ENCODE measurements at regions of chr6 and their contacts with region 1.

Region 1: DNA sequence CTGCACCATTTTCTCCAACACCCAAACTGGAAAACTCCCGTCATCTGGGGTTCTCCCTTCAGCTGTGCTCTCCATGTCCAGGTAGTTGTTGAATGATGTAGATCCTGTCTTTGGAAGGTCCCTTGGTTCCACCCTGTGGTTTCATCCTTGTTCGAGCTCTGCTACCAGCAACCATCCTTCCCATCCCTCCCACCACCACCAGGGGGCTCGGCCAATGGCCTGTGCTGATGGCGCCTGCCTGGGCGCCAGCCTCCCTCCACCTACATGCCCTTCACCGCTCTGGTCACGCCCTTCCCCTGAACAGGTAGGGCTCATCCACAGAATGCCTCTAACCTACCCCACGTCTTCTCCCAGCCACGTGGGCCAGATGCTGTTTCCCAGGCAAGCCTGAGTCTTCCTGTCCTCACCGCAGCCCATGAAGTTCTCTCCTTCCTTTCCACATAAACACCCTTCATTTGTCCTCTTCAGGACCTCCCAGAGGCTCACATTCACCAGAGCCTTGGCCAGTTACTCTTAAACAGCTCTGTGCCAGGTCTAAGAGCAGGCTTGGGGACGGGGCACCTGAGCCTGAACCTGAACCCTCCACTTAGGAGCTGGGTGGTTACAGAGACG is 75.1 kb upstream of the DUSP22 start:
- DNase-seq: no peak
- CTCF ChIP-seq: peak; percentile 50

Region 2: DNA sequence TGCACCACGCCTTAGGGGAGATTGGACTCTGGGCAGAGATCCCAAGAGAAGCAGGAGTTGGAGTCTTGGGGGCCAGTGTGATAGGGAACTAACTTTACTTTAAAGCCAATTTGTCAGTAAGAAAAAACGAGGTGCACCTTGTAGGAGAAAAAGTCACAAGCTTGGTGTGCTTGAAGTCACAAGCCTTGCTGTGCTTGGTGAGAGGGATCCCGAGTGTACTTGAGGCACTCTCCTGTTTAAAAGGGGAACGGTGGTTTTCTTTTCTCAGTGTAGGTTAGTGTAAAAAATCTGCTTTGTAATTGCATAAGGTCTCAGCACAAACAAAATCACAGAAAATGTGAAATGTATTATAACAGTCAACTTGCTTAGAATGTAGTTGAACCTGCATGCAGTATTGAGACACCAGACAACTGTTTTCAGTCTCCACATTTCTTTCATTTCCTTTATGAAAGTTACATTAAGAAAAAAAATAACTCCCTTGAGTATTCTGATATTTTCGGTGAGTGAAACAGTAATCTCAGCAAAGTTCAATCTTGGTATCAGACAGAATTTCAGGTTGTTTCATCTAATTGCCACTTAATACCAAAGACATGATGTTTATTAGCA is 36.0 kb before region 1 on chr6:
- CTCF ChIA-PET with region 1: interaction called, 620 read pairs
- POLR2A ChIA-PET with region 1: no interaction called
- DNase-seq: peak; percentile 65
- CTCF ChIP-seq: no peak

Region 3: DNA sequence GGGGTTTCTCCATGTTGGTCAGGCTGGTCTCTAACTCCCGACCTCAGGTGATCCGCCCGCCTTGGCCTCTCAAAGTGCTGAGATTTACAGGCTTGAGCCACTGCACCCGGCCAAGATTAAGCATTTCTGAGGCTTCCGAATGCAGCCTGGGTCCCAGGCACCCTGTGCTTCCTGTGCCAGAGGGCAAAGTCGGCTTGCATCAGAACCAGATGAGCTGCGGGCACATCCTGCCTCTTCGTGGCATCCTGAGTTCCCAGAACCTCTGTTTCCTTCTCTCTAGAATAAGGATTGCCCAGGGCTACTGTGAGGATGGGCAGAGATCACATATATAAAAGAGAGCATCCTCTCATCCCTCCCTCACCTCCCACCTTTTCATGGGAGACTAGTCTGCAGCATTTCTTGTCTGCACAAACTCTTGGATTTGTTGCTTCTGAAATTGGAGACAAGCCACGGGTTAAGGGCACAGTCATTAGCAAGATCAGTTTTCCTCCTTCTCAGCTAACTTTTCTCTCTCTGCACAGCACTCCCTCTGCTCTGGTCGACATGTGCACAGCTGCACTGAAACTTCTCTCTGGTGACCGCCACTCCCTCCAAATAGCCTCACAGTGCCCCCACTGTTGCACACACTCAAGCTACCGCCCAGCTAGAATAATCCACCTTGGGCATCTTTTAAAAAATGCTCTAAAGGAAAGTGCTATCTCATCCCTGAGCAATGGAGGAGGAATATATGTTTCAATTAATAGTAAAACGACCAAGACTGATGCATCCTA is 24.1 kb after region 1 on chr6:
- CTCF ChIA-PET with region 1: no interaction called
- POLR2A ChIA-PET with region 1: no interaction called
- DNase-seq: no peak
- CTCF ChIP-seq: no peak

Region 4: DNA sequence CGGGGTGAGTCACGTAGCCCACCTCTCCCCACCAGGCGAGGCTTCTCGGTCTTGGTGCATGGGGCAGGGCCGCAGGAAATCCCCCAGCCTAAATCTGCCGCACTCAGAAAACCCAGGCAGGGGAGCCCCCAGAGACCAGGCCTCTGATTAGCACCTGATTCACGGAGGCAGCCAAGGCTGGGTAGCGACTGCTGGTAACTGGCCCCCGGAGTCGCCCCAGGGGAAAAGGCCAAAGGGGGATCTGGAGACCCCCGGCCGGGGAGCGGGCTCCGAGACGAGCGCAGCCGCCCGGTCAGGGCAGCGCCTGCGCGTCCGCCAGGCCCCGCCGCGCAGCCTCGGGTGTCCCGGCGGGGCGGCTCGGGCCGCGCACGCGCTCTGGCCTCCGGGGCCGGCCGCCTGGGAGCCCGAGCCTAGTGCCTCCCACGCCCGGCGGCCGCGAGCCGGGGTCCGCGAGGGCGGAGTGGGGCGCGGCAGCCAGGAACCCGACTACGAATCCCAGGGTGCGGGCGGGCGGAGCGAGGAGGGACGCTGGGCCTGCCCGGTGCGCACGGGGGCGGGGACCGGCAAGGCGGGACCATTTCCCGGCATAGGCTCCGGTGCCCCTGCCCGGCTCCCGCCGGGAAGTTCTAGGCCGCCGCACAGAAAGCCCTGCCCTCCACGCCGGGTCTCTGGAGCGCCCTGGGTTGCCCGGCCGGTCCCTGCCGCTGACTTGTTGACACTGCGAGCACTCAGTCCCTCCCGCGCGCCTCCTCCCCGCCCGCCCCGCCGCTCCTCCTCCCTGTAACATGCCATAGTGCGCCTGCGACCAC is 74.7 kb after region 1 on chr6 and contains the start of gene DUSP22:
- CTCF ChIA-PET with region 1: interaction called, 11 read pairs
- POLR2A ChIA-PET with region 1: no interaction called
- DNase-seq: peak; percentile 100
- CTCF ChIP-seq: no peak

Region 5: DNA sequence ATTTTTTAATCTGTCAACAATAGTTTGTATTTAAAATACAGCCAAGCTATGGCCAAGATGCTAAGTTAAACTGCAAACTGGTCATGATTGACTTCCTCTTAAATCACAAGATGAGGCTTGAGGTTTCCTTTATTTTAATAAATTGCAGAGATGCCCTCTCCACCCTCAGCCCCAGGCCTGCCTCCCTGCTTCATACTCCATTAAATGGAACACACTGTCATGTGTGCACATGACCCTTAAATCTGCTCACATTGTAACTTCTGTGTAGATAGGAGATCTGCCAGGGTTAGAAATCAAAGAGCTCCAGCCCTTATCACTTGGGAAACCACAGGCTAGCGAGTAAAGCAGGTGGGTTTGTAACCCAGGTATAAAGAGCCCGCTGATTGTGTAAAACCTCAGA is 95.9 kb after region 1 on chr6:
- CTCF ChIA-PET with region 1: interaction called, 20 read pairs
- POLR2A ChIA-PET with region 1: no interaction called
- DNase-seq: no peak
- CTCF ChIP-seq: no peak

Region 6: GRCh38 chr6:336159-337019 is 119.2 kb after region 1 on chr6:
- CTCF ChIA-PET with region 1: interaction called, 17 read pairs
- POLR2A ChIA-PET with region 1: interaction called, 3 read pairs
- DNase-seq: peak; percentile 70
- CTCF ChIP-seq: no peak